Naive thymus-derived CD4-positive, alpha-beta T cell (primary cell): ENCODE measurements at regions of chr6 and their contacts with region 1.

Region 1: GRCh38 chr6:78995946-78996345 is 82.1 kb downstream of the PHIP start:
- DNase-seq: no peak
- ATAC-seq: no peak
- H3K4me3 ChIP-seq: no peak overlapping the region
- H3K4me3 Mint-ChIP-seq: no peak overlapping the region
- H3K27ac ChIP-seq: no peak overlapping the region
- H3K27ac Mint-ChIP-seq: peak overlapping the region in 1 of 9 donors; percentile 28
- H3K4me1 ChIP-seq: no peaks in the 10 kb centered on the region
- H3K4me1 Mint-ChIP-seq: no peaks in the 10 kb centered on the region
- H3K27me3 ChIP-seq: no peaks in the 10 kb centered on the region
- H3K27me3 Mint-ChIP-seq: no peaks in the 10 kb centered on the region

Region 2: DNA sequence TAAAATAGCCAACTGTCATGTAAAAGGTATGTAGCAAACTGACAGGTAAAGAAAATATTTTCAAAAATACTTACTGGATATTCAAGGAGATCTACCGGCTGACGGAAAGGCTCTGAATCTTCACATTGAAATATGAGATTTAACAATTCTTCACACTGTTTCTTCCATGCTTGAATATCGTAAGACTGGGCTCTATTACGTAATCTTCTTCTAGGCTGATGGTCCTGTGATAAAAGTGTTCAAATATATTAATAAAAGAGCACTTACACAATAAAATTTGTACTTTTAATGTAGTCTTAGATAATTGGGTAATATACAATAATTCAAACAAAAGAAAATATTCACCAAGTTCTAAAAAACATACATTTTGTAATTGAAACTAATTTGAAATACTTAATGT is 41.2 kb before region 1 on chr6:
- CTCF ChIA-PET with region 1: no interaction called
- POLR2A ChIA-PET with region 1: no interaction called
- intact Hi-C with region 1: loop called in 1 of 2 experiments (anchors 5 kb)
- DNase-seq: no peak
- ATAC-seq: no peak
- H3K4me3 ChIP-seq: no peak overlapping the region
- H3K4me3 Mint-ChIP-seq: no peak overlapping the region
- H3K27ac ChIP-seq: no peak overlapping the region
- H3K27ac Mint-ChIP-seq: no peak overlapping the region
- H3K4me1 ChIP-seq: no peaks in the 10 kb centered on the region
- H3K4me1 Mint-ChIP-seq: peaks cover 0 to 5% (median 0%) of the 10 kb centered on the region in 7 donors
- H3K27me3 ChIP-seq: no peaks in the 10 kb centered on the region
- H3K27me3 Mint-ChIP-seq: no peaks in the 10 kb centered on the region

Region 3: GRCh38 chr6:78961513-78961912 is 34.4 kb before region 1 on chr6:
- CTCF ChIA-PET with region 1: no interaction called
- POLR2A ChIA-PET with region 1: no interaction called
- intact Hi-C with region 1: loop called (anchors 5 kb)
- DNase-seq: no peak
- ATAC-seq: no peak
- H3K4me3 ChIP-seq: no peak overlapping the region
- H3K4me3 Mint-ChIP-seq: no peak overlapping the region
- H3K27ac ChIP-seq: no peak overlapping the region
- H3K27ac Mint-ChIP-seq: no peak overlapping the region
- H3K4me1 ChIP-seq: no peaks in the 10 kb centered on the region
- H3K4me1 Mint-ChIP-seq: peaks cover 0 to 3% (median 0%) of the 10 kb centered on the region in 7 donors
- H3K27me3 ChIP-seq: no peaks in the 10 kb centered on the region
- H3K27me3 Mint-ChIP-seq: no peaks in the 10 kb centered on the region

Region 4: DNA sequence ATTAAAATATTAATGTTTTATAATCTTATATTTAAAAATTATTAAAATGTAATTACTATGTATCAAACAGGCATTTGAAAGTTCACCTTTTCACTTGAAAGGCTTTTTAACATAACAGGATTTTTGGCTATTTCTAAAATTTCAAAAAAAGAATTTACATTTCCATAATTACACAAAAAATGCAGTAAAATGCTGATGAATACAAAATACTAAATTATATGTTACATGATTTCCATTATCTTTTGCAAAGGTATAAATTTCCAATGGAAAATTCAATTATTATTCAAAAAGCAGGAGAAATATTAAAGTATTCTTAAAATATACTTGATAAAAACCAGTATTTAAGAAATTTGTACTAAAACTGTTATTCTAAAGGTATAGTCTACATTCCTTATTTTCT is 16.0 kb after region 1 on chr6:
- CTCF ChIA-PET with region 1: no interaction called
- POLR2A ChIA-PET with region 1: no interaction called
- intact Hi-C with region 1: loop called in 1 of 2 experiments (anchors 2 kb)
- DNase-seq: no peak
- ATAC-seq: no peak
- H3K4me3 ChIP-seq: no peak overlapping the region
- H3K4me3 Mint-ChIP-seq: no peak overlapping the region
- H3K27ac ChIP-seq: no peak overlapping the region
- H3K27ac Mint-ChIP-seq: no peak overlapping the region
- H3K4me1 ChIP-seq: no peaks in the 10 kb centered on the region
- H3K4me1 Mint-ChIP-seq: peaks cover 0 to 22% (median 6%) of the 10 kb centered on the region in 7 donors
- H3K27me3 ChIP-seq: no peaks in the 10 kb centered on the region
- H3K27me3 Mint-ChIP-seq: no peaks in the 10 kb centered on the region